GM12878 (cell line): ENCODE measurements at regions of chr15 and their contacts with region 1.

Region 1: DNA sequence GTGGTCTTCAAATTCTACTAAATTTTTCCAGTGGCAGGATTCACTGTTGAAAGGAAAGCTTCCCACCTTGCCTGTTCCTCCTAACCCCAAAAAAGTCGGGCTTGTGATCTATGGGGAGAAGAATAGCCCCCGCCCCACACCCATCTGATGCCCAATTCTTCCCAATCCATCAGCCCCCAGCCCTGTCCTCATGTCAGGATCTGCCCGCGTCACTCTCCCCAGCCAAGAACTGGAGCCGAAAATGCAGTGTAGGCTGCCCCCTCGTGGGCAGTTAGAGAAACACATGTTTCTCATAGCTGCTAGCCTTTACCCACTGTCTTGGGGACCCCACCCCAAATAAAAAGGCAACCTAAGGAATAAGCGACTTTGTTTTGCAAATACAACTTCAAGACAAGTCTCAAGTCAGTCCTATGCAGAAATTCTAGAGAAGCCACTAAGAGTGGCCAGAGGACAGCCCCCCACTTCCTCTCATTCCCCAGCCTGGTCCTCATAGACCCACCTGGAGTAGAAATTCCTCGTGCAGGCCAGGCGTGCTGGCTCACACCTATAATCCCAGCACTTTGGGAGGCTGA is 13.0 kb upstream of the CSK start:
- DNase-seq: no peak
- ATAC-seq: peak; percentile 58
- H3K4me3 ChIP-seq: no peak overlapping the region
- H3K27ac ChIP-seq: no peak overlapping the region
- H3K4me1 ChIP-seq: peaks cover 12% of the 10 kb centered on the region
- H3K27me3 ChIP-seq: no peaks in the 10 kb centered on the region
- CTCF ChIP-seq: peak; percentile 76 to 84 (median 76)
- EP300 ChIP-seq: no peak
- POLR2A ChIP-seq: no peak
- RAD21 ChIP-seq: peak; percentile 91

Region 2: DNA sequence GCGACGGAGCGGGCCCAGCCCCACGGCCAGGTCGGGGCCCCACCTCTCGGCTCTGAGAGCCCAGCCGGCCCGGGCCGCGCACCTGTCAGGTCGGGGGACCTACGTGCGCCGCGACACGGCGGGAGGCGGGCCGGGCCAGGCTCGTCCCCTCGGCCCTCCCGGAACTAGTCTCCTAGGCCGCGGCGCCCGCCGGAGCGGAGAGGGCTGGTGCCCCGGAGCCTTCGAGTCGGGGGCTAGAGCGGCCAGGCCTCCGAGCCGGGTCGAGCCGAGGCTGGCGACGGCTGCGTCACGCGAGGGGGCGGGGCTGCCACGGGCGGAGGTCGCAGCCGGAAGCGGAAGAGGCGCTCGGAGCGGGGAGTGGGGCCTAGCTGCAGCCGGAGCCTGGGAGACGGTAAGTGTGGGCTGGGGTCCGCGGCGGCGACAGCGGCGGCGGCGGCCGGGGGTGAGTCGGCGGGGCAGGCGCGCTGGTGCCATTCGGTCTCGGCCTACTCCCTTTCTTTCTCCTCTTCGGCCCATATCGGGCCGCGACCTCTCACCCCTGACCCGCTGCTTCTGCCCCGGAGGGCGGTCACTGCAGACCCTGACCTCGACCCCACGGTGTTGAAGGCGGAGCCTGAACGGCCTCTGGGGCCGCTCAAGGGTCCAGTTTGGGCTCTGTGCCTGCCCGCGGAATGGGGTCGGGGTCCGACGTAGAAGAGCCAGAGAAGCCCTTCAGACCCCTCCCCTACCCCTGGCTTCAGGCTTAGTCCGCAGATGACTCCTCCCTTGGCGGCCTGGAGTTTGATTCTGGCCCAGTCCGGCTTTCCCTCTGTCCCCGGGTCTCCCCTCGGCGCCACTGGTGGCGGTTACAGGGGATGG is 153.1 kb before region 1 on chr15 and contains the start of gene CLK3:
- CTCF ChIA-PET with region 1: interaction called, 14 read pairs
- POLR2A ChIA-PET with region 1: no interaction called
- RAD21 ChIA-PET with region 1: interaction called, 13 read pairs
- SMC1A ChIA-PET with region 1: interaction called, 4 read pairs
- in situ Hi-C with region 1: no loop called
- intact Hi-C with region 1: no loop called
- DNase-seq: peak; percentile 79
- ATAC-seq: peak; percentile 89
- H3K4me3 ChIP-seq: peak within 1 kb of the TSS; percentile 89
- H3K27ac ChIP-seq: peak within 1 kb of the TSS; percentile 97
- H3K4me1 ChIP-seq: peaks cover 17% of the 10 kb centered on the region
- H3K27me3 ChIP-seq: no peaks in the 10 kb centered on the region; a peak in 1 of 4 replicates
- CTCF ChIP-seq: no peak
- EP300 ChIP-seq: peak in 1 of 2 experiments; percentile 11; a peak in 1 of 4 replicates
- POLR2A ChIP-seq: peak; percentile 75
- RAD21 ChIP-seq: no peak
- polyA plus RNA-seq, gene CLK3: 3.3 to 5.8 TPM

Region 3: DNA sequence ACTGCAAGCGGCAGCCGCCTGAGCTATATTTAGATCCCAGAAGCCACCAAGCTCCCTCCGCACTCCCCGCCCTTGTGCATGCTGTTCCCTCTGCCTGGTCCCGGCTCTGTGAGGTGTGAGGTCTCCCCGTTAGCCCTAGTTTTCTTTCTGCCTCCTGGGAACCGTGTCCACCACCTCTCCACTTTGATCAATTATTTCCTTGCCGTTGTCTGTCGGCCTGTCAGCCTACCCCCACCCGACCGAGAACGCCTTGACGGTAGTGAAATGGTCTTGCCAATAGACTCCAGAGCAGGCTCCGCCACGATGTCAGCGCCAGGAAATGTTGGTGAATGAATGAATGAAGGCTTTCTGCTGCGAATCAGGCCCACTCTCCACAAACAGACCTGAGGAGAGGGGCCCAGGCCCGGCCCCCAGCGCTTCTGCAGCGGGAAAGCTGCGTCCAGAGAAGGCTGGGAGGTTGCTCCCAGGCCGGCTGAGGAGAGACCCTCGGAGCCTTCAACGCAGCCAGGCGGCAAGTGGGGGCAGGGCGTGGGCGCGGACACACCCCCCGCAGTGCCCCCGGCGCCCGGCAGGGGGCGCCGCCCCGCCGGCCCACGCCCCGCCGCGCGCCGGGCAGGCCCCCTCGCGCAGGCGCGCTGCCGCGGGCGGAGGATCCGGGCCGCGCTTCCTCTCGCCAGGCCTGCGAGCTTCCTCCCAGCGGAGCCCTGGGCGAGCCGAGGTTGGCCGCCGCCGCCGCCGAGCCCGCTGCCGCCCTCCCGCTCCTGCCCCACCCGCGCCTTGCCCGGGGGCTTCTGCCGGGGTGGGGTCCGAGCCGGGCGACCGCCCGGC is 12.8 kb after region 1 on chr15 and contains the start of gene CSK:
- CTCF ChIA-PET with region 1: interaction called, 1,288 read pairs
- POLR2A ChIA-PET with region 1: interaction called, 602 read pairs
- RAD21 ChIA-PET with region 1: interaction called, 1,186 read pairs
- SMC1A ChIA-PET with region 1: interaction called, 811 read pairs
- in situ Hi-C with region 1: no loop called
- intact Hi-C with region 1: no loop called
- DNase-seq: no peak
- ATAC-seq: no peak; the same call in 2 of the 3 replicates
- H3K4me3 ChIP-seq: peak within 1 kb of the TSS; percentile 94
- H3K27ac ChIP-seq: peak within 1 kb of the TSS; percentile 96
- H3K4me1 ChIP-seq: peaks cover 59% of the 10 kb centered on the region
- H3K27me3 ChIP-seq: no peaks in the 10 kb centered on the region
- CTCF ChIP-seq: peak; percentile 52 to 62 (median 62); a peak in 5 of 6 replicates
- EP300 ChIP-seq: peak in 1 of 2 experiments; percentile 6; a peak in 1 of 4 replicates
- POLR2A ChIP-seq: peak; percentile 78
- RAD21 ChIP-seq: peak; percentile 28; the same call in 1 of the 2 replicates
- polyA plus RNA-seq, gene CSK: 3.4 to 11.5 TPM

Region 4: DNA sequence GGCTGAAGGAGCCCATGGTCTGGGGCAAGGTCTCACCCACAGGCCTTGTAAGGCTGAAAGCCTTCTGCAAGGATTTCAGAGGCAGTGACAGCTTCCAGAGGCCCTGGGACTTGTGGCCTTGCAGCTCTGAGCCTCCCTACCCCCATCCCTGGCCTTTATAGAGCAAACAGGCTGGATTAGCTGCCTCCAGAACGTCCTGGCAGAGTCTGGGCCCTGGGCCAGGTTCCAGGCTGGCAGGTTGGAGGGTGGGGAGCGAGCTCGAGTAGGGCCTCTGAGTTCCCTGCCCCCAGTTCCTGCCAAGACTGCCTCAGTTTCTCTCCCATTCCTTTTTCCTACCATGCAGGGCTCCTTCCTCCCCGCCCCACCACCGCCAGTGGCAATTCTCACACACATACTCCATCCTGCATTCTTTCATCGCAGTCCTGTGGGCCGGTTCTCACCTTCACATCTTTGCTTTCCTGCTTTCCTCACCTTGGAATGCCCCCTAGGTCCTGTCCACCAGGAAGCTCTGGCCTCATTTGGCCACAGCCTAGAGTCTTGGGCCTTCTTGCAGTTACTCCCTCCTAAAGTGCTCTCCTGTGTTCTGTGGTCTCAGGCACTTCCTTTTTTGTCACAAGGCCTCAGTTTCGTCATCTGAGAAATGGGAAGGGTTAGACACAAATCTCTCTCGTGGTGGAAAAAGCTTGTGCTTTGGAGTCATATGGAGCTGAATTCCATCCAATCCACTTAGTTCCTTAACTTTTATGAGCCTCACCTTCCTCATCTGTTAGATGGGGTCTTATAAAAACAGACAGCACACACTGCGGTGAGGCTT is 46.5 kb after region 1 on chr15:
- CTCF ChIA-PET with region 1: interaction called, 14 read pairs
- POLR2A ChIA-PET with region 1: interaction called, 5 read pairs
- RAD21 ChIA-PET with region 1: interaction called, 10 read pairs
- SMC1A ChIA-PET with region 1: interaction called, 4 read pairs
- in situ Hi-C with region 1: no loop called
- intact Hi-C with region 1: no loop called
- DNase-seq: no peak
- ATAC-seq: peak; percentile 45
- H3K4me3 ChIP-seq: no peak overlapping the region
- H3K27ac ChIP-seq: no peak overlapping the region
- H3K4me1 ChIP-seq: peaks cover under 1% of the 10 kb centered on the region; the same call in 1 of the 2 replicates
- H3K27me3 ChIP-seq: no peaks in the 10 kb centered on the region
- CTCF ChIP-seq: no peak
- EP300 ChIP-seq: no peak
- POLR2A ChIP-seq: no peak
- RAD21 ChIP-seq: no peak

Region 5: DNA sequence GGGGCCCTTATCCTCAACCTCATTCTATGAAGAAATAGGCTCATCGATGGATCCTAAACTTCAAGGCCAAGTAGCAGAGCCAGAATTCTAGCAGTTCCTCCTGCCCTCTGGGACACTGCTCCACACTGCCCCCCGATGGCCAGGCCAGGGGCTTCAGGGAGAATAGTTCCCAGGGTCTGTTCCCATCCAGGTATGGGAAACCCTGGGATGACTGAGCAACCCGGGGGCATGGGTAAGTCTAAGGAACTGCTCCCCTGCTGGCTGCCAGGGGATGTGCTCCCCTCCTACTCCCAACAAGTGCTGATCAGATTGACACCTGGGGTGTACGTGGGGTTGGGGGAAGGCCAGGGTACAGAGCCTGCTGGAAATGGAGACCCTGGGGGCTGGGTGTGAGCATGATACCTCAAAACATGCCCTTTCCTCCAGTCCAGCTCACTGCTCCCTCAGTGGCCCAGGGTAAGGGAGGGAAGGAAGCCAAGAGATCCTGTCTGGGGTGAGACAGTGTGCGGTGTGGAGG is 66.5 kb after region 1 on chr15:
- CTCF ChIA-PET with region 1: interaction called, 53 read pairs
- POLR2A ChIA-PET with region 1: no interaction called
- RAD21 ChIA-PET with region 1: interaction called, 17 read pairs
- SMC1A ChIA-PET with region 1: interaction called, 16 read pairs
- in situ Hi-C with region 1: no loop called
- intact Hi-C with region 1: loop called (anchors 1 kb)
- DNase-seq: no peak
- ATAC-seq: peak; percentile 69
- H3K4me3 ChIP-seq: no peak overlapping the region
- H3K27ac ChIP-seq: no peak overlapping the region
- H3K4me1 ChIP-seq: no peaks in the 10 kb centered on the region
- H3K27me3 ChIP-seq: no peaks in the 10 kb centered on the region
- CTCF ChIP-seq: peak; percentile 65 to 86 (median 83)
- EP300 ChIP-seq: no peak
- POLR2A ChIP-seq: no peak
- RAD21 ChIP-seq: peak; percentile 69

Region 6: GRCh38 chr15:74873036-74873755 is 104.3 kb after region 1 on chr15 and contains the start of gene SCAMP2:
- CTCF ChIA-PET with region 1: interaction called, 5 read pairs
- POLR2A ChIA-PET with region 1: interaction called, 8 read pairs
- RAD21 ChIA-PET with region 1: interaction called, 13 read pairs
- SMC1A ChIA-PET with region 1: interaction called, 5 read pairs
- in situ Hi-C with region 1: no loop called
- intact Hi-C with region 1: no loop called
- DNase-seq: peak; percentile 85
- ATAC-seq: peak; percentile 92
- H3K4me3 ChIP-seq: peak within 1 kb of the TSS; percentile 93
- H3K27ac ChIP-seq: peak within 1 kb of the TSS; percentile 94
- H3K4me1 ChIP-seq: peaks cover 28% of the 10 kb centered on the region
- H3K27me3 ChIP-seq: no peaks in the 10 kb centered on the region
- CTCF ChIP-seq: no peak
- EP300 ChIP-seq: no peak
- POLR2A ChIP-seq: peak; percentile 95
- RAD21 ChIP-seq: no peak
- polyA plus RNA-seq, gene SCAMP2: 10.9 to 22.5 TPM

Region 7: DNA sequence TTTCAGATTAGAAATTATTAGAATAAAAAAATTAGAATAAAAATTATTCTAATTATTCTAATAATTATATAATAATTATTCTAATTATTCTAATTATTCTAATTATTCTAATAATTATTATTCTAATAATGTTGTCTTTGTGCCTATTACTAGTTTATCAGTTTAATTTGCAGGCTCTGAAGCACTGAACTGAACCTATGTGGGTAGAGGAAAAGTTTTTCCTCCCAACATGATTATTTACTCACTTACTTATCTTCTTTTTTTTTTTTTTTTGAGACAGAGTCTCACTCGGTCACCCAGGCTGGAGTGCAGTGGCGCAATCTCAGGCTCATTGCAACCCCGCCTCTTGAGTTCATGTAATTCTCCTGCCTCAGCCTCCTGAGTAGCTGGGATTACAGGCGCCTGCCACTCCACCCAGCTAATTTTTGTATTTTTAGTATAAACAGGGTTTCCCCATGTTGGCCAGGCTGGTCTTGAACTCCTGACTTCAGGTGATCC is 393.1 kb after region 1 on chr15:
- CTCF ChIA-PET with region 1: no interaction called
- POLR2A ChIA-PET with region 1: no interaction called
- RAD21 ChIA-PET with region 1: no interaction called
- SMC1A ChIA-PET with region 1: no interaction called
- in situ Hi-C with region 1: no loop called
- intact Hi-C with region 1: no loop called
- DNase-seq: no peak
- ATAC-seq: no peak
- H3K4me3 ChIP-seq: no peak overlapping the region
- H3K27ac ChIP-seq: no peak overlapping the region
- H3K4me1 ChIP-seq: peaks cover 4% of the 10 kb centered on the region
- H3K27me3 ChIP-seq: no peaks in the 10 kb centered on the region
- CTCF ChIP-seq: no peak
- EP300 ChIP-seq: no peak
- POLR2A ChIP-seq: no peak
- RAD21 ChIP-seq: no peak